IMR-90 (cell line): ENCODE measurements at regions of chr12 and their contacts with region 1.

Region 1: DNA sequence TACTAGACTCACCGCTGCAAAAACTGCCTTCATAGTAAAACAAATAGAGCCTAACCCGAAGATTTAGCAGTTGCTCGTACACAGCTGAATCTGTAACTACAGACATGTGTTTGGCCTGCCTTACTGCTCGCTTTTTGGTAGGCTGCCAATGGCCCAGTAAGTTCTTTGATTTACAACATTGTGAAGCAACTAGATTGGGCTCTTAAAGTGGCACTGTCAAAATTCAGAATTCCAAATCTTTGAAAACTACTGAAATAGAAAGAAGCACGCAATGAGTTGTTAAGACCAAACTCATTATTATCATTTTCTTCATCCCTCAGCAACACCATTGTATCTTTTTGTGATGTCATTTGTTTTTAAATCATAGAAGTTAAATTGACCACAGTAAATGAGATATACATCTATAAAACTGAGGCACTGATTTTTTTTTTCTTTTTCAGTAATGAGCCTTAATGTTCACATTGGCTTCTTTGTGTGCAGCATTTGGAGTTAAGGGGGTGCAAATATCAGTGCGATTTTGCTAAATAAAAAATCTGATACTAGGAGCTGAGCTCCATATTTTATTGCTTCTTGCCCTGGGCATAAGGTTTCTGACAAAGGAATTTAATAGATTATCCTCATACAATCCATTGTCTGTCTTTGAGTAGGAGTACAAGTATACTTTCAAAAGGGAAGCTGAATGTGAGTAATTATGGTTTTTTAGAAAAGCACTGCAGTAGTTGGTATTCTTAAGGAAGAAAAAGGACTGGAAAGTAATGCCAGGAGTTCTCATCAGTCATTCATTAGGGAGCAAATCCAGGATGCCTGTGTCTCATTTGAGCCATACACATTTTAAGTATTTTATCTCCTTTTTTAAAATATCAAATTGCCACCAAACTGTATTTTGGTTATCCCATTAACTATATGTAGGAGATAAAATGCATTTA is 138.5 kb downstream of the KICS2 start:
- DNase-seq: peak; percentile 95
- ATAC-seq: peak; percentile 69
- H3K4me3 ChIP-seq: no peak overlapping the region
- H3K27ac ChIP-seq: peak overlapping the region; percentile 26; the same call in 1 of the 2 replicates
- H3K4me1 ChIP-seq: peaks cover 21% of the 10 kb centered on the region
- H3K27me3 ChIP-seq: no peaks in the 10 kb centered on the region
- CTCF ChIP-seq: no peak
- POLR2A ChIP-seq: no peak
- RAD21 ChIP-seq: no peak

Region 2: DNA sequence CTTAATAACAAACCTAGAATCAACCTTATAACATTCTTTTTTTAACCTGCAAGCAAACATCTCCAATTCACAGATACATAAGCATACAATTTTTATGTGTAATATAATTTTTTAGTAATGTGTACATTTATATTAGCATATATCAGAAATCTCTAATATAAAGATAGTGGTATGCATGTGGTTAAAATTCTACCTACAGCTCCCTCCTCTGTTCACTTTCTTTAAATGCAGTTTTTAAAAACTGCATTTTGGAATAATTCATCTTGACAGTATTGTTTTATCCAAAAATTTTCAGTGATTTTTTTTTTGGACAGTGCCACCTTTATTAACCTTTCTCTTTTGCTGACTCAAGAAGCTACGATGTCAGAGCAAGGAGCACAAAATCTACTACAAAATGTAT is 317.1 kb before region 1 on chr12:
- CTCF ChIA-PET with region 1: no interaction called
- POLR2A ChIA-PET with region 1: no interaction called
- dilution Hi-C with region 1: no loop called
- in situ Hi-C with region 1: no loop called
- intact Hi-C with region 1: no loop called
- DNase-seq: no peak
- ATAC-seq: no peak
- H3K4me3 ChIP-seq: no peak overlapping the region
- H3K27ac ChIP-seq: no peak overlapping the region
- H3K4me1 ChIP-seq: no peaks in the 10 kb centered on the region
- H3K27me3 ChIP-seq: peaks cover 7% of the 10 kb centered on the region
- CTCF ChIP-seq: peak; percentile 29
- POLR2A ChIP-seq: no peak
- RAD21 ChIP-seq: no peak

Region 3: DNA sequence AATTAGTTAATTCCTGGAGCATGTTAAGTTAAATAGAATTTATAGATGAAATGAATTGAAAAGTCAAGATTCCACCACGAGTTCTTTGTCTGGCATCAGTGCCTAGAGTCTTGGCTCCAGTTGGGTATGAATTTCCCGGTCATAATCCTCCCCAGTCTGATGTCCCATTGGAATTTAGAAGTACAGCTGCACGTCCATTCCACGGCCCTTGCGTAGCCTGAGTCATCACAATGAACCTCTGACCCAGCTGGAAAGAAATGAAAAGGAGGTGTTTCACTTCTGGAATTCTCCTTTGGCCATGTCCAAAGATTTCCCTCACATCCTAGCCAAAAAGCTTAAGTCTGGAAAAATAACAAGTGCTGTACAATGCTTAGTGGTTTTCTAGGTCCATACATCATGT is 15.8 kb after region 1 on chr12:
- CTCF ChIA-PET with region 1: no interaction called
- POLR2A ChIA-PET with region 1: no interaction called
- dilution Hi-C with region 1: no loop called
- in situ Hi-C with region 1: no loop called
- intact Hi-C with region 1: no loop called
- DNase-seq: peak; percentile 96
- ATAC-seq: peak; percentile 85
- H3K4me3 ChIP-seq: no peak overlapping the region
- H3K27ac ChIP-seq: peak overlapping the region; percentile 64
- H3K4me1 ChIP-seq: peaks cover 17% of the 10 kb centered on the region
- H3K27me3 ChIP-seq: no peaks in the 10 kb centered on the region
- CTCF ChIP-seq: no peak
- POLR2A ChIP-seq: no peak
- RAD21 ChIP-seq: no peak; the same call in 1 of the 2 replicates

Region 4: DNA sequence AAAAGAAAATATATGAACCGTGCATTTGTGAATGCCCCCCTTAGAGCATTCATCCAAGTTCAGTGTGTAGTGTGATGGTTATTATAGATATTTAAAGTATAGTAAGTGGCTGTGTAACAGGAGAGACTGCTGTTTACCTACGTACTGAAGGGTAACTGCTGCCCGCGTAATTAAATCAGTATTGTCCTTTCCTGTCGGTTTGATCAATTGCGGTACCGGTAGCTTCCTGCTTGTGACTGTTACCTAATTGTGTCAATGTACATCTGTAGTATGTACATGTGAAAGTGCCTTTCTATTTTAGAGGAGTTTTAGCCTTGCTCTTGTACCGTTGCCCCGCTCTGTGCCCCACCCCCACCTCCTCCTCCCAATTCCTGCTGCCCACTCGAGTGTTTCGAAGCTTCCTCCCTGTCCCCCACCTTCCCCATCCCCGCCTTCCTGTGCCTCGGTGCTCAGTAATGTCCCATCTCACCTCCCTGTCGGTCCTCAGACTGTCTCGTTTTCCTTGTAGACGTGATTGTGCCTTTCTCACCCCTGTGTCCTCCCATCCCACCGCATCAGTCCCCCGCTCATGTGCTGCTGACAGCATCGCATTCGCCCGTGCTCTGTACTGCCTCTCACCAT is 63.6 kb after region 1 on chr12:
- CTCF ChIA-PET with region 1: no interaction called
- POLR2A ChIA-PET with region 1: no interaction called
- dilution Hi-C with region 1: no loop called
- in situ Hi-C with region 1: no loop called
- intact Hi-C with region 1: no loop called
- DNase-seq: no peak
- ATAC-seq: no peak
- H3K4me3 ChIP-seq: no peak overlapping the region
- H3K27ac ChIP-seq: peak overlapping the region; percentile 40; the same call in 1 of the 2 replicates
- H3K4me1 ChIP-seq: peaks cover 3% of the 10 kb centered on the region; the same call in 1 of the 2 replicates
- H3K27me3 ChIP-seq: no peaks in the 10 kb centered on the region
- CTCF ChIP-seq: no peak
- POLR2A ChIP-seq: no peak
- RAD21 ChIP-seq: no peak

Region 5: GRCh38 chr12:64256166-64256800 is 172.7 kb after region 1 on chr12:
- CTCF ChIA-PET with region 1: no interaction called
- POLR2A ChIA-PET with region 1: no interaction called
- dilution Hi-C with region 1: no loop called
- in situ Hi-C with region 1: no loop called
- intact Hi-C with region 1: loop called (anchors 5 kb)
- DNase-seq: peak; percentile 67
- ATAC-seq: peak; percentile 66
- H3K4me3 ChIP-seq: no peak overlapping the region
- H3K27ac ChIP-seq: no peak overlapping the region
- H3K4me1 ChIP-seq: peaks cover 3% of the 10 kb centered on the region; the same call in 1 of the 2 replicates
- H3K27me3 ChIP-seq: no peaks in the 10 kb centered on the region
- CTCF ChIP-seq: peak; percentile 89
- POLR2A ChIP-seq: no peak
- RAD21 ChIP-seq: peak; percentile 95